ENCODE measurements at regions of chr9 and their contacts with region 1.

Region 1: GRCh38 chr9:136482793-136483588 is at the start of gene SEC16A:
- DNase-seq: peak; percentile 100
- H3K4me3 Mint-ChIP-seq: peak within 1 kb of the TSS; percentile 98
- H3K27ac Mint-ChIP-seq: peak within 1 kb of the TSS; percentile 98
- H3K4me1 Mint-ChIP-seq: peaks cover 30% of the 10 kb centered on the region
- H3K27me3 Mint-ChIP-seq: no peaks in the 10 kb centered on the region
- total RNA-seq, gene SEC16A: 54.1 to 57.0 TPM

Region 2: GRCh38 chr9:136312436-136312835 is 170.6 kb before region 1 on chr9:
- CTCF ChIA-PET with region 1: no interaction called
- POLR2A ChIA-PET with region 1: no interaction called
- intact Hi-C with region 1: no loop called
- DNase-seq: peak; percentile 60
- H3K4me3 Mint-ChIP-seq: no peak overlapping the region
- H3K27ac Mint-ChIP-seq: no peak overlapping the region
- H3K4me1 Mint-ChIP-seq: no peaks in the 10 kb centered on the region
- H3K27me3 Mint-ChIP-seq: no peaks in the 10 kb centered on the region

Region 3: GRCh38 chr9:136363606-136364370 is 119.2 kb before region 1 on chr9 and contains the start of gene DNLZ:
- CTCF ChIA-PET with region 1: interaction called, 6 read pairs
- POLR2A ChIA-PET with region 1: no interaction called
- intact Hi-C with region 1: loop called (anchors 1 kb)
- DNase-seq: peak; percentile 90
- H3K4me3 Mint-ChIP-seq: peak within 1 kb of the TSS; percentile 83
- H3K27ac Mint-ChIP-seq: peak within 1 kb of the TSS; percentile 88
- H3K4me1 Mint-ChIP-seq: peaks cover 9% of the 10 kb centered on the region
- H3K27me3 Mint-ChIP-seq: no peaks in the 10 kb centered on the region
- total RNA-seq, gene DNLZ: 14.5 to 15.2 TPM

Region 4: DNA sequence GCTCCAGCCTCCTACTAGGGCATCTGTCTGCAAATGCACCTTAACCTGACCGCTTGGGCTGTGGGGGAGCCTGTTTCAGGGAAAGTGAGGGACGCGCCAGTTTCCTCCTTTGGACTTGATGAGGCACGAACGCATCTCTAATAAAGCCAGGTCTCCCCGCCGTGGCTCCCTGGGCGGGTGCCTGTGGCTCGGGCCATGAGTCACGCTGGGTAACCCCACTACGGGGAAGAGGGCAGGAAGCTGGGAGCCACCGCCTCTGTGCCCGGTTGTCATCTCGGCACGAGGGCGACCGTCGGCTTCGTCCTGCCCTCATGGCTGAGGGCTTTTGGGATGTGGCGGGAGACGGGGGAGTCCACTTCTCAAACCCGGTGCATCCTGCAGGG is 50.8 kb after region 1 on chr9:
- CTCF ChIA-PET with region 1: interaction called, 24 read pairs
- POLR2A ChIA-PET with region 1: no interaction called
- intact Hi-C with region 1: no loop called
- DNase-seq: peak; percentile 91
- H3K4me3 Mint-ChIP-seq: peak overlapping the region; percentile 39
- H3K27ac Mint-ChIP-seq: peak overlapping the region; percentile 92
- H3K4me1 Mint-ChIP-seq: peaks cover 50% of the 10 kb centered on the region
- H3K27me3 Mint-ChIP-seq: no peaks in the 10 kb centered on the region

Region 5: GRCh38 chr9:136617746-136618579 is 135.0 kb after region 1 on chr9:
- CTCF ChIA-PET with region 1: no interaction called
- POLR2A ChIA-PET with region 1: no interaction called
- intact Hi-C with region 1: no loop called
- DNase-seq: no peak
- H3K4me3 Mint-ChIP-seq: no peak overlapping the region
- H3K27ac Mint-ChIP-seq: no peak overlapping the region
- H3K4me1 Mint-ChIP-seq: no peaks in the 10 kb centered on the region
- H3K27me3 Mint-ChIP-seq: peaks cover 1% of the 10 kb centered on the region

Region 6: GRCh38 chr9:136631038-136632000 is 148.3 kb after region 1 on chr9:
- CTCF ChIA-PET with region 1: interaction called, 106 read pairs
- POLR2A ChIA-PET with region 1: no interaction called
- intact Hi-C with region 1: loop called (anchors 1 kb)
- DNase-seq: peak; percentile 84
- H3K4me3 Mint-ChIP-seq: no peak overlapping the region
- H3K27ac Mint-ChIP-seq: no peak overlapping the region
- H3K4me1 Mint-ChIP-seq: no peaks in the 10 kb centered on the region
- H3K27me3 Mint-ChIP-seq: peaks cover 5% of the 10 kb centered on the region

Region 7: GRCh38 chr9:136790927-136791641 is 308.1 kb after region 1 on chr9 and contains the start of gene TMEM141:
- CTCF ChIA-PET with region 1: no interaction called
- POLR2A ChIA-PET with region 1: no interaction called
- intact Hi-C with region 1: loop called (anchors 1 kb)
- DNase-seq: peak; percentile 100
- H3K4me3 Mint-ChIP-seq: peak within 1 kb of the TSS; percentile 81
- H3K27ac Mint-ChIP-seq: peak within 1 kb of the TSS; percentile 79
- H3K4me1 Mint-ChIP-seq: peaks cover 21% of the 10 kb centered on the region
- H3K27me3 Mint-ChIP-seq: peaks cover 1% of the 10 kb centered on the region
- total RNA-seq, gene TMEM141: 42.3 to 45.2 TPM